BJ (cell line): ENCODE measurements at regions of chr20 and their contacts with region 1.

Region 1: DNA sequence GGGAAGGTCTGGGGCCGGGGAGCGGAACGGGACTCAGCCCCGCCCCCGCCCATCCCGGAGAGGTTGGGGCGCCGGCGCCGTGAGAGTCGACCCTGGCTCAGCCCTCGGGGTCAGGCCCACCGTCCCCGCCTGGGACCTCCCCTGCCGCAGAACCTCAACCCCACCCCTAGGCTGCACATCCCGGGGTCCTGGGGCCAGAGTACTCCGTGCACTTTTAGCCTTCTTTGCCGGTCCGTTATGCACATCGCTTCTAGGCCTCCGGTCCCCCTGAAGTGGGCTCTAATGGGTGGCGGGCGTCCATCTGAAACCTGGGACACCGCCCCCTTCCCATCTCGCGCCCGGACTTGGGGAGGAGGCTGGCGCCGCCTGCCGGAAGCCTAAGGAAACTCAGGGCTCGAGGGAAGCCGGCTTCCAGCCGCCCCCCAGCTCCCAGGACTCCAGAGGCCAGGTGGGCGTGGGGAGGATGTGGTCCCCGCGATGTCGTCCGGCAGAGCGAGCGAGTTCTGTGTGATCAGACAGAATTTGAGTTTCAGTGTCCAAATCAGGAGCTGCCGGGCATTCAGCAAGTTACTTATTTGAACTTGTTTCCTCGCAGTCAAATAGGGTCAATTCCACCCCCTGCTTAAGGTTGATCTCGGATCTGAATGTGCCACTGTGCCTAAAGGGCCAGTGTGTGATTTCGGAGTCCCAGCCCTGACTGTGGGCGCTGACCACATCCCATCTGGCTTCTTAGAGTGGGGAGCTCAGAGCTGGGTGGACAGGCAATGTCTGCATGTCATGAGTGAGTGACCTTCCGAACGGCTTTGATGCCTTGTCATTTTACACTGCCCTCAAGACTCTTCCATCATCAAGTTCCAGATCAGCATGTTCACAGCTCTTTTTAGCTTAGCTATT is 47.6 kb downstream of the CPXM1 start:
- DNase-seq: no peak
- H3K4me3 ChIP-seq: peak overlapping the region; percentile 49
- H3K27me3 ChIP-seq: peaks cover 32% of the 10 kb centered on the region
- CTCF ChIP-seq: peak; percentile 95

Region 2: DNA sequence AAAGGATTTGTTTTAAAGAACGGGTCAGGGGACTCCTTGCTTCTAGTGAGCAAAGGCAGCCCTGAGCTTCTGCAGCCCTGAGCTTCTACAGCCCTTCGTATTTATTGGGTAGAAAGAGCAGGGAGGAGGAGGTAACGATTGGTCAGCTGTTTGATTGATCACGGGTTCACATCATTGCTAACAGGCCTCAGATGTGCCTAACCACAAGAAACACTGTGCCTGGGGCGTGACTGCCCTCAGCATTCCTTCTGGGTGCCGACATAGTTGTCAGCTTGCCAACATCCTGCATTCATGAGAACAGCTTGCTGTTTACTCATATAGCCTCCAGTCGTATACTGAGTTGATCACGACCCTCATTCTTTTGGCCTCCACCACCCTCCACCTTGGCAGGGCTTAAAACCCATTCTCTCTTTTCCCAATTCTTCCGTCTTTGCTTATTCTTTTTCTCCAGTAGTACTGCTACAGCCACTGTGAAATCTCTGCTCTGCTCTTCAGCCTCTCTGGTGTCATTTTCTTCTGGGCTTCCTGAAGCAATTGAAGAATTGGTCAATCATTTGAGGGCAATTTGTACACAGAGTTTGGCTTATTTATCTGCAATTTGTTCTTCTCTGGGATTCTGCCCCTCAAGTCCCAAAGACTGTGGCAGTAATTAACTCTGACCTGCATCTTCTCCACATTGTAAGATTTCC is 125.8 kb before region 1 on chr20:
- CTCF ChIA-PET with region 1: no interaction called
- POLR2A ChIA-PET with region 1: no interaction called
- DNase-seq: peak; percentile 31
- H3K4me3 ChIP-seq: no peak overlapping the region
- H3K27me3 ChIP-seq: peaks cover 3% of the 10 kb centered on the region; the same call in 1 of the 2 replicates
- CTCF ChIP-seq: no peak

Region 3: GRCh38 chr20:2767768-2768631 is 15.2 kb after region 1 on chr20:
- CTCF ChIA-PET with region 1: interaction called, 72 read pairs
- POLR2A ChIA-PET with region 1: no interaction called
- DNase-seq: no peak
- H3K4me3 ChIP-seq: no peak overlapping the region
- H3K27me3 ChIP-seq: peaks cover 12% of the 10 kb centered on the region
- CTCF ChIP-seq: no peak

Region 4: GRCh38 chr20:2849529-2849928 is 96.7 kb after region 1 on chr20:
- CTCF ChIA-PET with region 1: interaction called, 166 read pairs
- POLR2A ChIA-PET with region 1: no interaction called
- DNase-seq: no peak
- H3K4me3 ChIP-seq: no peak overlapping the region
- H3K27me3 ChIP-seq: no peaks in the 10 kb centered on the region
- CTCF ChIP-seq: no peak

Region 5: GRCh38 chr20:2871661-2872458 is 119.0 kb after region 1 on chr20:
- CTCF ChIA-PET with region 1: interaction called, 12 read pairs
- POLR2A ChIA-PET with region 1: no interaction called
- DNase-seq: no peak
- H3K4me3 ChIP-seq: peak overlapping the region; percentile 90
- H3K27me3 ChIP-seq: no peaks in the 10 kb centered on the region
- CTCF ChIP-seq: no peak